Endothelial cell of umbilical vein (primary cell): ENCODE measurements at regions of chr7 and their contacts with region 1.

Region 1: GRCh38 chr7:13028825-13029099 is 341.3 kb downstream of the ARL4A start:
- DNase-seq: peak; percentile 80
- H3K4me3 ChIP-seq: no peak overlapping the region
- H3K27ac ChIP-seq: peak overlapping the region; percentile 47
- H3K4me1 ChIP-seq: peaks cover 18% of the 10 kb centered on the region
- H3K27me3 ChIP-seq: no peaks in the 10 kb centered on the region
- CTCF ChIP-seq: no peak
- POLR2A ChIP-seq: no peak

Region 2: GRCh38 chr7:13057462-13058200 is 28.9 kb after region 1 on chr7:
- CTCF ChIA-PET with region 1: interaction called, 3 read pairs
- POLR2A ChIA-PET with region 1: no interaction called
- dilution Hi-C with region 1: no loop called
- intact Hi-C with region 1: loop called (anchors 1 kb)
- DNase-seq: peak; percentile 79
- H3K4me3 ChIP-seq: peak overlapping the region in 2 of 3 experiments; percentile 36 to 56
- H3K27ac ChIP-seq: peak overlapping the region; percentile 81
- H3K4me1 ChIP-seq: peaks cover 13% of the 10 kb centered on the region
- H3K27me3 ChIP-seq: no peaks in the 10 kb centered on the region
- CTCF ChIP-seq: no peak
- POLR2A ChIP-seq: no peak